ENCODE measurements at regions of chr14 and their contacts with region 1.

Region 1: GRCh38 chr14:72104011-72104613 is 171.9 kb downstream of the RGS6 start:
- DNase-seq: no peak
- H3K4me3 ChIP-seq: no peak overlapping the region
- H3K27ac ChIP-seq: no peak overlapping the region
- H3K4me1 ChIP-seq: no peaks in the 10 kb centered on the region
- H3K27me3 ChIP-seq: no peaks in the 10 kb centered on the region
- CTCF ChIP-seq: no peak
- EP300 ChIP-seq: no peak
- POLR2A ChIP-seq: no peak

Region 2: GRCh38 chr14:70995676-70996075 is 1108.4 kb before region 1 on chr14:
- intact Hi-C with region 1: no loop called
- DNase-seq: no peak
- H3K4me3 ChIP-seq: no peak overlapping the region
- H3K27ac ChIP-seq: no peak overlapping the region
- H3K4me1 ChIP-seq: no peaks in the 10 kb centered on the region
- H3K27me3 ChIP-seq: no peaks in the 10 kb centered on the region
- CTCF ChIP-seq: no peak
- EP300 ChIP-seq: no peak
- POLR2A ChIP-seq: no peak

Region 3: DNA sequence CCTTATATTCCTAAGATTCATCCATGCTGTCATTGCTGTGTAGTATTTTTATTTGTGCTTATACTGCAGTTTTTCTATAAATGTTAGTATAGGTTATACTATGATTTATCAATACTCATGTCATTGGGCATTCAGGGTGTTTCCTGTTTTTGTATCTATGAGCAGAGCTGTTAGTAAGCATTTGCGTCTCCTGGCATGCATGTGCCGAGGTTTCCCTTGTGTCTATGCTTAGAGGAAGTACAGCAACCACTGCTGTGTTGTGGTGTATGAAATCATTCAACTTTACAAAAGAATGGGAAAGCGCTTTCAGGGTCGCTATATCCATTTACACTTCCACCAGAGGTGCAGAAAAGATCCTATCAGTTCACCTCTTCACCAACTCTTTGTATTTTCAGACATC is 49.2 kb before region 1 on chr14:
- intact Hi-C with region 1: no loop called
- DNase-seq: no peak
- H3K4me3 ChIP-seq: no peak overlapping the region
- H3K27ac ChIP-seq: no peak overlapping the region
- H3K4me1 ChIP-seq: no peaks in the 10 kb centered on the region
- H3K27me3 ChIP-seq: no peaks in the 10 kb centered on the region
- CTCF ChIP-seq: no peak
- EP300 ChIP-seq: no peak
- POLR2A ChIP-seq: no peak

Region 4: DNA sequence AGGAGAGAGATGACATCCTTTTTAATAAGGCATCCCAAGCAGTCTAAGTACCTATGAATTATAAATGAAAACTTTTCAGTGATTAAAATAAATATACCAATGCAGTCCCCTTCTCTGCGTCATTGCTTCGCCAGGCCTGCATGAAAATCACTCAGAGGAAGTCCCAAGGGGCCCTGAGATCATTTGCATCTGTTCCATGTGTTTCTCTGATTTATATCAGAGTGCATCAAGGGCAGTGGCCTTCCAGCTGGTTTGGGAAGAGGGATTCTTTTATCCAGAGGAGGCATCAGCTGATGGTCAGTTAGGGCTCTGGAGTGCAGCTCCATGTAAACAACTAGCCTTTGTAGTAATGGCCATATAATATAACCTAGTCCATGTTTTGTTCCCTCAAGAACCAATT is 38.2 kb after region 1 on chr14:
- intact Hi-C with region 1: no loop called
- DNase-seq: no peak
- H3K4me3 ChIP-seq: no peak overlapping the region
- H3K27ac ChIP-seq: no peak overlapping the region
- H3K4me1 ChIP-seq: no peaks in the 10 kb centered on the region
- H3K27me3 ChIP-seq: no peaks in the 10 kb centered on the region
- CTCF ChIP-seq: no peak
- EP300 ChIP-seq: no peak
- POLR2A ChIP-seq: no peak

Region 5: DNA sequence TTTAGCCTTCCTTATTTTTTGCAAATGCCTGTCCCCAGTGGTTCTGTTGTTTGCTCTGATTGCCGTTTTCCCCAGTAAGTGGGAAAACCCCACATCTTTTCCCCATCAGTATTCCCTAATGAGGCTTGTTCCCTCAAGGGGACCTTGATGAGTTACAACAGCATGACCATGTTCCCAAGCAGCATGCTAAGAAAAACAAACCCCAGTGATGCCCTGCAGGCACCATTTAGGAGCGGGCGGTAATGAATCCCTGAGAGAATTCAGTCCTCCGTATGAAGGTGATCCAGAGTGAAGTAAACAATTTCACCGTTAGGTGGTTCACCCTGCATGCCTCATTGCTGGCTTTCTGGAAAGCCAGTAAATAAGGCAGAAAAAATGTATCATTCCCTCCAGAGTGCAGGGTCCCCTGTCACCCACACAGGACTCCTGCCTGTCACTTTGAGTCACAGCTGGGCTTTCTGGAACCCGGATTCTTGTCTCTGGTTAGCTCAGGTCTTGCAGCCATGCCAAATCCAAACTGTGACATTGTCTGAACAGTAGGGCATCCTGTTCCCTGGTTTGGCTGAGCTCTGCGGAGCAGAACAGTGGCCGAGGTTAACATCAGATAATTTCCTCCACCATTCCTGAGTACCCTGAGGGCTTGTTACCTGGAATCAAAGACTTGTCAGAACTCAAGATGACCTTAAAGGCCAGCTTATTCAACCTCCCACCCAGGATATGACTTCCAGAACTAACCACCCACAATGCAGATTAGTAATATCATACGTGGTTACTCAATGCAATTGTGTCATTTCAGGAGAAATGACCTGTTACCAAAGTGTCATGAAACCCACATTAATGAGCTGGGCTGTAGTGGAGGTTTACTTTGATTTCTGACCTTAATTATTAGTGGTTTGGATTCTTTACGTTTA is 50.9 kb after region 1 on chr14:
- intact Hi-C with region 1: loop called (anchors 5 kb)
- DNase-seq: no peak
- H3K4me3 ChIP-seq: no peak overlapping the region
- H3K27ac ChIP-seq: no peak overlapping the region
- H3K4me1 ChIP-seq: no peaks in the 10 kb centered on the region
- H3K27me3 ChIP-seq: no peaks in the 10 kb centered on the region
- CTCF ChIP-seq: no peak
- EP300 ChIP-seq: no peak
- POLR2A ChIP-seq: no peak

Measured in sigmoid colon (tissue), 7 donors.